Activated CD4-positive, alpha-beta memory T cell treated with anti-CD3 and anti-CD28 coated beads for 36 hours (primary cell): ENCODE measurements at regions of chr17 and their contacts with region 1.

Region 1: GRCh38 chr17:81977211-81978027 is at the start of gene ASPSCR1:
- DNase-seq: peak; percentile 91
- H3K4me3 Mint-ChIP-seq: peak within 1 kb of the TSS; percentile 92
- H3K27ac Mint-ChIP-seq: peak within 1 kb of the TSS; percentile 92
- H3K4me1 Mint-ChIP-seq: peaks cover 33% of the 10 kb centered on the region
- H3K27me3 Mint-ChIP-seq: no peaks in the 10 kb centered on the region
- total RNA-seq, gene ASPSCR1: 25.4 to 27.1 TPM

Region 2: GRCh38 chr17:81918832-81919545 is 58.4 kb before region 1 on chr17:
- CTCF ChIA-PET with region 1: no interaction called
- POLR2A ChIA-PET with region 1: no interaction called
- intact Hi-C with region 1: loop called (anchors 1 kb)
- DNase-seq: no peak
- H3K4me3 Mint-ChIP-seq: no peak overlapping the region
- H3K27ac Mint-ChIP-seq: no peak overlapping the region
- H3K4me1 Mint-ChIP-seq: peaks cover 24% of the 10 kb centered on the region
- H3K27me3 Mint-ChIP-seq: no peaks in the 10 kb centered on the region

Region 3: GRCh38 chr17:81935709-81936084 is 41.7 kb before region 1 on chr17:
- CTCF ChIA-PET with region 1: no interaction called
- POLR2A ChIA-PET with region 1: no interaction called
- intact Hi-C with region 1: loop called (anchors 2 kb)
- DNase-seq: no peak
- H3K4me3 Mint-ChIP-seq: peak overlapping the region; percentile 84
- H3K27ac Mint-ChIP-seq: no peak overlapping the region
- H3K4me1 Mint-ChIP-seq: peaks cover 10% of the 10 kb centered on the region
- H3K27me3 Mint-ChIP-seq: peaks cover 1% of the 10 kb centered on the region

Region 4: GRCh38 chr17:82022981-82023374 is 45.6 kb after region 1 on chr17 and contains the start of gene LRRC45:
- CTCF ChIA-PET with region 1: interaction called, 13 read pairs
- POLR2A ChIA-PET with region 1: interaction called, 8 read pairs
- intact Hi-C with region 1: loop called (anchors 1 kb)
- DNase-seq: peak; percentile 100
- H3K4me3 Mint-ChIP-seq: peak within 1 kb of the TSS; percentile 84
- H3K27ac Mint-ChIP-seq: peak within 1 kb of the TSS; percentile 66
- H3K4me1 Mint-ChIP-seq: peaks cover 24% of the 10 kb centered on the region
- H3K27me3 Mint-ChIP-seq: no peaks in the 10 kb centered on the region
- total RNA-seq, gene LRRC45: 16.3 to 19.0 TPM